Naive thymus-derived CD4-positive, alpha-beta T cell (primary cell): ENCODE measurements at regions of chr16 and their contacts with region 1.

Region 1: GRCh38 chr16:89873972-89874689 is 739 bp downstream of the TCF25 start:
- DNase-seq: peak; percentile 87 to 97 (median 90)
- ATAC-seq: peak; percentile 90
- H3K4me3 ChIP-seq: peak overlapping the region; percentile 94
- H3K4me3 Mint-ChIP-seq: peak overlapping the region; percentile 73 to 95 (median 92)
- H3K27ac ChIP-seq: peak overlapping the region; percentile 100
- H3K27ac Mint-ChIP-seq: peak overlapping the region; percentile 89 to 99 (median 97)
- H3K4me1 ChIP-seq: peaks cover 4 to 17% of the 10 kb centered on the region in 2 donors
- H3K4me1 Mint-ChIP-seq: peaks cover 6 to 32% (median 20%) of the 10 kb centered on the region in 7 donors
- H3K27me3 ChIP-seq: no peaks in the 10 kb centered on the region
- H3K27me3 Mint-ChIP-seq: no peaks in the 10 kb centered on the region

Region 2: DNA sequence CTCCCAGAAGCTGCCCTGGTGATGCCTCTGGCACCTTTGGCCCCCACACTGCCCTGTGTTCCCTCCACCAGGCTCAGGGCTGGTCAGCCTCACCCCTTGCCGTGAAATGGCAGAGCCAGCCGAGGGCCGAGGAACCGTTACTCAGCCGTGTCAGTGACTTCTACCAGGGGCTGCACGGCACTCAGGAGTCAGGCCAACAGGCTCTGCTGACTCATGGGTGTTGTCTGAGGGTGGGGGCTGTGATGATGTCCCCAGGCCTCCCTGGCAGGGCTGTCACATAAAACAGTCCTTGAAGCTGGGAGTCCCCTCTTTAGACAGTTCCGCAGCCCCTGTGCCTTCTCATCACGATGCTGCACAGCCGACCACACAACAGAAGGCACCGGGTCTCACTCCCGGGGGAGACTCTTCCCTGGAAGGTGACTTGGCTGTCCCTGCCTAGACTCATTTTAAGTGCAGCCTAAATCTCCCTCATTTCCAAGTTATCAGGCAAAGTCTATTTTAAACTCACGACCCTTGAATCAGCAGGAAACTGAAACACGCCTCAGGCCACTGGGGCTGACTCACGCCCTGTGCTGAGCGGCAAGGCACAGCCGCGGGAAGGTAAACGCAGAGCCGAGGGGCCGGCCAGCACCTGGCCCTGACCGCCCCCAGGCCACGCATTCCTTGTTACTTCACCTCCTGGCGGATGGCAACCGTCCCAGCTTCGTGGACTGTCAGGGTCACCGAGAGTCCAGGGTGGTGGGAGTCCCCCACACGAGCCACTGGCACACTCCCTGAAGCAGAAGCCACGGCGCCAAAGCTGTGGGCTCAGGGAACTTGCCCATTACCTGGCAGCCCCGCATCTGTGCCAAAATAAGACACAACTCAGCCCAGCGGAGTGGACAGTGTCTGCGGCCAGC is 554.0 kb before region 1 on chr16:
- CTCF ChIA-PET with region 1: no interaction called
- POLR2A ChIA-PET with region 1: no interaction called
- intact Hi-C with region 1: loop called in 1 of 2 experiments (anchors 5 kb)
- DNase-seq: peak in 1 of 9 donors; percentile 59
- ATAC-seq: no peak
- H3K4me3 ChIP-seq: no peak overlapping the region
- H3K4me3 Mint-ChIP-seq: peak overlapping the region in 9 of 10 donors; percentile 36 to 78 (median 48)
- H3K27ac ChIP-seq: no peak overlapping the region
- H3K27ac Mint-ChIP-seq: peak overlapping the region in 7 of 9 donors; percentile 21 to 82 (median 54)
- H3K4me1 ChIP-seq: peaks cover 81 to 94% of the 10 kb centered on the region in 2 donors
- H3K4me1 Mint-ChIP-seq: peaks cover 80 to 97% (median 93%) of the 10 kb centered on the region in 7 donors
- H3K27me3 ChIP-seq: no peaks in the 10 kb centered on the region
- H3K27me3 Mint-ChIP-seq: no peaks in the 10 kb centered on the region

Region 3: GRCh38 chr16:89534252-89534756 is 339.8 kb before region 1 on chr16:
- CTCF ChIA-PET with region 1: no interaction called
- POLR2A ChIA-PET with region 1: no interaction called
- intact Hi-C with region 1: no loop called
- DNase-seq: peak in 7 of 9 donors; percentile 60 to 80 (median 74)
- ATAC-seq: peak; percentile 96
- H3K4me3 ChIP-seq: peak overlapping the region; percentile 5
- H3K4me3 Mint-ChIP-seq: peak overlapping the region; percentile 57 to 83 (median 72)
- H3K27ac ChIP-seq: peak overlapping the region; percentile 49
- H3K27ac Mint-ChIP-seq: peak overlapping the region; percentile 91 to 100 (median 94)
- H3K4me1 ChIP-seq: peaks cover 9 to 22% of the 10 kb centered on the region in 2 donors
- H3K4me1 Mint-ChIP-seq: peaks cover 17 to 27% (median 24%) of the 10 kb centered on the region in 7 donors
- H3K27me3 ChIP-seq: no peaks in the 10 kb centered on the region
- H3K27me3 Mint-ChIP-seq: no peaks in the 10 kb centered on the region

Region 4: DNA sequence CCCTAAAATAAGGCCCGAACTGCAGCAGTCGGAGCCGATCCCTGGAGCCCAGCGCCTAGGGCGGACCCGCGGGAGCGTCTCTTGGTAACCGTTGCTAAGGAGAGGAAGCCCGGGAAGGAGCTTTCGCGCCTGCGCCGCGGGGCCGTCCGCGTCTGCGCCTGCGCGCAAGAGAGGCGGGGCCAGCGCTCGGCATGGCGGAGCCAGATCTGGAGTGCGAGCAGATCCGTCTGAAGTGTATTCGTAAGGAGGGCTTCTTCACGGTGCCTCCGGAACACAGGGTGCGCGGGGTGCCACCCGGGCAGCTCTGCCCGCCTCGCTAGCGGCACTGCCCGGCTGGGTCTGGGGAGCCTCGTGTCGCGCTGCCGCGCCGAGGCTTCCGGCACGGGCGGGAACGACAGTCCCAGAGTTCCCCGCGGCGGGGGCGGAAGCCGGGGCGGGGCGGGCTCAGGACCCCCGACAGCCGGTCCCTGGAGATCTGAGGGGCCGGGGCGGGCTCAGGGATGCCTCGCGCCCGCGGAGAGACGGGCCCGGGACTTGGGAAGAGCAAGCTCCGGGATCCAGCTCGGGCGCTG is 187.5 kb before region 1 on chr16 and contains the start of gene CDK10:
- CTCF ChIA-PET with region 1: no interaction called
- POLR2A ChIA-PET with region 1: interaction called, 6 read pairs
- intact Hi-C with region 1: loop called in 1 of 2 experiments (anchors 5 kb)
- DNase-seq: peak; percentile 80 to 97 (median 89)
- ATAC-seq: peak; percentile 90
- H3K4me3 ChIP-seq: peak within 1 kb of the TSS; percentile 96
- H3K4me3 Mint-ChIP-seq: peak within 1 kb of the TSS; percentile 86 to 96 (median 92)
- H3K27ac ChIP-seq: peak within 1 kb of the TSS; percentile 93
- H3K27ac Mint-ChIP-seq: peak within 1 kb of the TSS; percentile 80 to 95 (median 92)
- H3K4me1 ChIP-seq: peaks cover 0 to 7% of the 10 kb centered on the region in 2 donors
- H3K4me1 Mint-ChIP-seq: peaks cover 9 to 18% (median 17%) of the 10 kb centered on the region in 7 donors
- H3K27me3 ChIP-seq: no peaks in the 10 kb centered on the region
- H3K27me3 Mint-ChIP-seq: no peaks in the 10 kb centered on the region
- total RNA-seq, gene CDK10: 91.5 to 150 (median 102) TPM

Region 5: DNA sequence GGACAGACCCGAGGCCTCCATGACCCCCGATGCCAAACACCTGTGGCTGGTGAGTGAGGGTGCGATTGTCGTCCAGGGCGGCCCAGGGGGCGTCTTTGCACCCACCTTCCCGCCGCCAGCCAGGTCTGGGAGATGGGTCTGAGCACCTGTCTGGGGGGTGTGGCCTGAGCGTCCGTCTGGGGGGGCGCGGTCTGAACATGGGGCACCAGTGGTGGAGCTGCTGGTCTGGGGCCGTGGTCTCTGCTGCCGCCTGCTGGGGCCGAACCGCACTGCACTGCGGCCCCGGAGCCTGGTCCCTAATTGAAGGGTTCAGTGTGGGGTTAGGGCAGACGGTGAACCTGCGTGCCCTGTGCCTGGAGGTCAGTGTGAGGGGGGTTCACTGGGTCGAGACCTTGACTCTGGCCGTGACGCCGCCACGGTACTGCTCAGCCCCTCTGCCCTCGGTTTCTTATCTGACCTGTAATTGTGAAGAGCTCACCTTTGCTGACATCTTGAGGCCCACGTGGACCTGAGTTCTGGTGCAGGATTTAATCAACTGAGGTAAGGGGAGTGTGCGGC is 13.3 kb before region 1 on chr16:
- CTCF ChIA-PET with region 1: interaction called, 11 read pairs
- POLR2A ChIA-PET with region 1: interaction called, 67 read pairs
- intact Hi-C with region 1: loop called (anchors 1 kb)
- DNase-seq: peak; percentile 61 to 85 (median 70)
- ATAC-seq: peak; percentile 91
- H3K4me3 ChIP-seq: no peak overlapping the region
- H3K4me3 Mint-ChIP-seq: peak overlapping the region in 5 of 10 donors; percentile 1 to 41 (median 26)
- H3K27ac ChIP-seq: no peak overlapping the region
- H3K27ac Mint-ChIP-seq: peak overlapping the region in 8 of 9 donors; percentile 39 to 83 (median 70)
- H3K4me1 ChIP-seq: peaks cover 27 to 32% of the 10 kb centered on the region in 2 donors
- H3K4me1 Mint-ChIP-seq: peaks cover 32 to 42% (median 34%) of the 10 kb centered on the region in 7 donors
- H3K27me3 ChIP-seq: no peaks in the 10 kb centered on the region
- H3K27me3 Mint-ChIP-seq: no peaks in the 10 kb centered on the region

Region 6: DNA sequence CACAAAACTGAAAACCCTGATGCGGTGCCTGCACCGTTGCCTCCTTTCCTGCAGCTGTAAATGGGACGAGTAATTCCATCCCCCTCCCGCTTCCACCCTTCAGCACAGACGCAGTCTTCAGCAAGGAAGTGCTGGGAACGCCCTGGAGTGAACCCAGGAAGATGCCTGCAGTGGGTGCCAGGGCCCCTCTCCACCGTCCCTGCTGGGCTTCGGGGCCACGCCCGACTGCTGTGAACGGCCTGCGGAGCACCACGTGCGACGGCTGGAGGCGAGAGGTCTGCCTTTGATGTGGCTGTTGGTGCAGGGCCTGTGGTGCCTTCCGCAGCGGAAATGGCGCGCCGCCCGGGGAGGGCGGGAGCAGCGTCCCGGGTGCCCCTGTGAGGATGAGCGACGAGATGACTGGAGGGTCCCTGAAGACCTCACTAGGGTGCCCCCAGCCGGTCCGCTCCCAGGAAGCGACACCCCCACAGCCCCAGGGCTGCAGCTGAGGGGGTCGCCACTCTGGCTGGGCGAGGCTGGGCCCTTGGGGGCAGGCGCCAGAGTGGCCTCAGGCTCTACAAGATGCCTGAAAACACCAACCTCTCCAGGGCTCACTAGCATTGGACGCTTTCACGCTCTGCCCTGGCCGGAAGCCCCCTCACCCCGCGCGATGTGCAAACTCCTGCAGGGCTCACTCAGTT is 43.8 kb after region 1 on chr16:
- CTCF ChIA-PET with region 1: no interaction called
- POLR2A ChIA-PET with region 1: interaction called, 5 read pairs
- intact Hi-C with region 1: loop called (anchors 2 to 5 kb)
- DNase-seq: peak; percentile 53 to 83 (median 67)
- ATAC-seq: peak; percentile 81
- H3K4me3 ChIP-seq: peak overlapping the region; percentile 43
- H3K4me3 Mint-ChIP-seq: peak overlapping the region; percentile 67 to 86 (median 73)
- H3K27ac ChIP-seq: no peak overlapping the region
- H3K27ac Mint-ChIP-seq: peak overlapping the region in 4 of 9 donors; percentile 44 to 87 (median 71)
- H3K4me1 ChIP-seq: peaks cover 20 to 25% of the 10 kb centered on the region in 2 donors
- H3K4me1 Mint-ChIP-seq: peaks cover 20 to 52% (median 38%) of the 10 kb centered on the region in 7 donors
- H3K27me3 ChIP-seq: peaks cover 0 to 6% of the 10 kb centered on the region in 2 donors
- H3K27me3 Mint-ChIP-seq: peaks cover 4 to 30% (median 17%) of the 10 kb centered on the region in 5 donors

Region 7: GRCh38 chr16:89972244-89973234 is 98.4 kb after region 1 on chr16:
- CTCF ChIA-PET with region 1: no interaction called
- POLR2A ChIA-PET with region 1: interaction called, 7 read pairs
- intact Hi-C with region 1: loop called (anchors 1 to 2 kb)
- DNase-seq: peak; percentile 86 to 97 (median 92)
- ATAC-seq: peak; percentile 96
- H3K4me3 ChIP-seq: peak overlapping the region; percentile 97
- H3K4me3 Mint-ChIP-seq: peak overlapping the region; percentile 96 to 100 (median 99)
- H3K27ac ChIP-seq: peak overlapping the region; percentile 82
- H3K27ac Mint-ChIP-seq: peak overlapping the region; percentile 89 to 99 (median 96)
- H3K4me1 ChIP-seq: peaks cover 12 to 22% of the 10 kb centered on the region in 2 donors
- H3K4me1 Mint-ChIP-seq: peaks cover 13 to 45% (median 30%) of the 10 kb centered on the region in 7 donors
- H3K27me3 ChIP-seq: no peaks in the 10 kb centered on the region
- H3K27me3 Mint-ChIP-seq: peaks cover 0 to 2% (median 0%) of the 10 kb centered on the region in 5 donors